ENCODE measurements at regions of chr16 and their contacts with region 1.

Region 1: DNA sequence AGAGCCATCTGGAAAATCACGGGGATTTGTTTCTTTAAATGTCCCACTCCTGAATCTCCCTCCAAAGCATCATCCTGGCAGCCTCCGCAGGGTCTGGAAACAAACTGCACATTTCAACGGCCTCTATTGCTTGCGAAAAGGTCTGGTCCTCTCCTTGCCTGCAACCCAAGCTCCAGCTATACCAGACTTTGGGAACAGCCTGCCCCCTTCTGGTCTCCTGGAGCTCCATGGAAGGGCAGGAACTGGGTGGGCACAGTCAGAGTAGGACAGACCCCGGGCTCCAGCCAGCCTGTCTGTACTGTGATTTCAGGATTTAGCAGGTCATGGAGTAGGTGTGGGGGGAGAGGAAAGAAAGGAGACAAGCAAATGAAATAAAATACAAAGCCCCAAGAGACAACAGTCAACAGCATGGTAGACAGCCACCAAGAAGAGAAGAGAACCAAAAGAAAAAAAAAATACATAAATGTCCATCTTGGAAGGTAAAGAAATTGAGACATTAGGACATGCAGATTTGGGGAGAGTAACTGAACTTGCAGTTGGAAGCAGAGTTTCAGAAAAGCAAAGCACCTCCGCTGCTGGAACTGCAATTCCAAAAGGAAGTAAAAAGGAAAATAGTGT is 2.7 kb downstream of the XYLT1 start:
- DNase-seq: peak; percentile 51 to 72 (median 65)
- ATAC-seq: peak; percentile 66 to 81 (median 73)
- H3K4me3 ChIP-seq: peak overlapping the region in 4 of 12 donors; percentile 4 to 72 (median 63)
- H3K27ac ChIP-seq: peak overlapping the region in 1 of 12 donors; percentile 90
- H3K4me1 ChIP-seq: peaks cover 0 to 33% (median 15%) of the 10 kb centered on the region in 12 donors
- H3K27me3 ChIP-seq: peaks cover 0 to 35% (median 19%) of the 10 kb centered on the region in 9 donors
- CTCF ChIP-seq: peak; percentile 20 to 81 (median 60)
- POLR2A ChIP-seq: no peak

Region 2: DNA sequence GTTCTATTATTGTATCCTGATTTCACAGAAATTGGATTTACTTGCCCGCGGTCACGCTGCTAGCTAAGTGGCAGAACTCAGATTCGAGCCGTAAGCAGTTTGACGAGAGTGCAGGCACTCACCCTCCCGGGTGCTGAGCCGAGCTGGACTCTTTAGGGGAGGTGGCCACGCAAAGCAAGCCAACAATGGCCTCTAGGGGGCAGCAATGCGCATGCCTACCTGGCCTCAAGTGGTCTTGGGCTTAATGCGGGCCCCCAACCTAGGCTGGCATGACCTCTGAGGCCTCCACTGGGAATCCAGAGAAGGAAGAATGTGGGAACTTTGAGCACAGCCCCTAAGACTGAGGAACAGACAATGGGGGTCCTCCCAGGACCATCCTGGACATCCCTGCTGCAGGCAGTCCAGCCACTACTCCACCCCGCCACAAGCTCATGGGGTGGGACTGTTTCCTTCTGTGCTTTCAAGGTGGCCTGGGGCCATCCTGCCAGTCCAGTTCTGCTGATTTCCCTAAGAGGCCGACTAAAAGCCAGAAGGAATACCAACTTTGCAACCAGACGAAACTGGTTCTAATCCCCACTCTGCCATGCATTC is 273.7 kb before region 1 on chr16:
- intact Hi-C with region 1: loop called in 3 of 10 experiments (anchors 5 to 10 kb)
- DNase-seq: peak; percentile 21 to 68 (median 46)
- ATAC-seq: peak; percentile 49 to 62 (median 50)
- H3K4me3 ChIP-seq: no peak overlapping the region
- H3K27ac ChIP-seq: no peak overlapping the region
- H3K4me1 ChIP-seq: no peaks in the 10 kb centered on the region
- H3K27me3 ChIP-seq: no peaks in the 10 kb centered on the region
- CTCF ChIP-seq: peak; percentile 37 to 74 (median 62)
- POLR2A ChIP-seq: no peak

Region 3: GRCh38 chr16:17277977-17278381 is 190.1 kb before region 1 on chr16:
- intact Hi-C with region 1: loop called in 8 of 10 experiments (anchors 2 to 10 kb)
- DNase-seq: peak in 2 of 5 donors; percentile 28 to 45
- ATAC-seq: peak in 3 of 4 donors; percentile 63 to 69 (median 65)
- H3K4me3 ChIP-seq: no peak overlapping the region
- H3K27ac ChIP-seq: no peak overlapping the region
- H3K4me1 ChIP-seq: peaks cover 0 to 6% (median 0%) of the 10 kb centered on the region in 12 donors
- H3K27me3 ChIP-seq: no peaks in the 10 kb centered on the region
- CTCF ChIP-seq: peak; percentile 9 to 61 (median 44)
- POLR2A ChIP-seq: no peak

Region 4: DNA sequence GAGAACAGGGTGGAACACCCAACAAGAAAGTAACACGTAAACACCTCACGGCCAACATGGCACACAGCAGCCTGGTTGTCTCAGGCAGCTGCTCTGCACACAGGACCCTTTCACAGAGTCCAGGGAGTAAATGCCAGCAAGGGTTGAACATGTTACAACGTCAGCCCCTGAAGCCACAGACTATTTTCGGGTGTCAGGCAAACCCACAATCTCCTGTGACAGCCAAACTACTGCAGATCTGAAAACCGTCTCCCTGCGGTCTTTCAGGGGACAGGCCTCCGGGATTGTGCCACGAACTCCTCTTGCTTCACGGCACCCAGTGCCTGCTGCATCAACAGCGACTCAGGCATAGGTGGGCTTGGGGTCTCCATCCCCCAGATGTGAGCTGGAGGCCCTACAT is 125.0 kb before region 1 on chr16:
- intact Hi-C with region 1: loop called in 2 of 10 experiments (anchors 10 kb)
- DNase-seq: no peak
- ATAC-seq: no peak
- H3K4me3 ChIP-seq: no peak overlapping the region
- H3K27ac ChIP-seq: peak overlapping the region in 2 of 12 donors; percentile 30 to 80
- H3K4me1 ChIP-seq: peaks cover 0 to 75% (median 26%) of the 10 kb centered on the region in 12 donors
- H3K27me3 ChIP-seq: no peaks in the 10 kb centered on the region
- CTCF ChIP-seq: no peak
- POLR2A ChIP-seq: no peak

Region 5: GRCh38 chr16:17529982-17530765 is 62.1 kb after region 1 on chr16:
- intact Hi-C with region 1: loop called in 1 of 10 experiments (anchors 10 kb)
- DNase-seq: no peak
- ATAC-seq: no peak
- H3K4me3 ChIP-seq: peak overlapping the region in 1 of 12 donors; percentile 15
- H3K27ac ChIP-seq: no peak overlapping the region
- H3K4me1 ChIP-seq: no peaks in the 10 kb centered on the region
- H3K27me3 ChIP-seq: peaks cover 0 to 4% (median 0%) of the 10 kb centered on the region in 9 donors
- CTCF ChIP-seq: no peak
- POLR2A ChIP-seq: no peak